HepG2 (cell line): ENCODE measurements at regions of chr3 and their contacts with region 1.

Region 1: GRCh38 chr3:82133070-82133606 is 371.7 kb upstream of the GBE1 start:
- DNase-seq: peak; percentile 42
- ATAC-seq: peak; percentile 90
- H3K4me3 ChIP-seq: no peak overlapping the region
- H3K27ac ChIP-seq: no peak overlapping the region
- H3K4me1 ChIP-seq: peaks cover 12% of the 10 kb centered on the region
- H3K27me3 ChIP-seq: no peaks in the 10 kb centered on the region
- CTCF ChIP-seq: peak; percentile 71
- EP300 ChIP-seq: no peak
- POLR2A ChIP-seq: no peak
- RAD21 ChIP-seq: no peak

Region 2: GRCh38 chr3:81419228-81419627 is 713.9 kb before region 1 on chr3:
- CTCF ChIA-PET with region 1: no interaction called
- POLR2A ChIA-PET with region 1: no interaction called
- in situ Hi-C with region 1: no loop called
- intact Hi-C with region 1: loop called (anchors 5 kb)
- DNase-seq: peak; percentile 1
- ATAC-seq: no peak
- H3K4me3 ChIP-seq: no peak overlapping the region
- H3K27ac ChIP-seq: no peak overlapping the region
- H3K4me1 ChIP-seq: no peaks in the 10 kb centered on the region
- H3K27me3 ChIP-seq: no peaks in the 10 kb centered on the region
- CTCF ChIP-seq: peak; percentile 40
- EP300 ChIP-seq: no peak
- POLR2A ChIP-seq: no peak
- RAD21 ChIP-seq: no peak

Region 3: DNA sequence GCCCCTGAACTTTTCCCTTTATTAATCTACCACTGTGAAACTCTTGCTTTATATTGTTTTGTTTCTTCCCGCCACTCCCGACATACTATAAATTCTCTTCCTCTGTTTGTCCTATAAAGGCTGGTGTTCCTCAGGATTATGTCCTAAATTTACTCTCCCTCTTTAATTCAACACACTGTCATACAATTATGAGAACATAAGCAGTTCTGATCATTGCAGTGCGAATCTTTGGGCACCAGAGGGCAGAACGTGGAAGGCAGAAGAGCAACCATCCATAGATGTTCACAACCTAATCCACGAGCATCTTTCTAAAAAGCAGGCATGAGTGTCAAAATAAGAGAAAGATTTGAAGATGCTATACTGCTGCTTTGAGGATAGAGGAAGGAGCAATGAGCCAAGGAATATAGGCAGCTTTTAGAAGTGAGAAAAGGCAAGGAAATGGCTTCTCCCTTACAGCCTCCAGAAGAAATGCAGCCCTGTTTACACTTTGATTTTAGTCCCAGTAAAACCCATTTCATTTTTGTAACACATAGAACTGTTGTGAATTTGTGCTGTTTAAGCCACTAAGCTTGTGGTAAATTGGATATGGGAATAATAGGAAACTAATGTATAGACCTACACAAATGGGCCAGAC is 551.1 kb before region 1 on chr3:
- CTCF ChIA-PET with region 1: no interaction called
- POLR2A ChIA-PET with region 1: no interaction called
- in situ Hi-C with region 1: no loop called
- intact Hi-C with region 1: loop called (anchors 10 kb)
- DNase-seq: peak; percentile 20
- ATAC-seq: peak; percentile 87
- H3K4me3 ChIP-seq: no peak overlapping the region
- H3K27ac ChIP-seq: no peak overlapping the region
- H3K4me1 ChIP-seq: no peaks in the 10 kb centered on the region
- H3K27me3 ChIP-seq: no peaks in the 10 kb centered on the region
- CTCF ChIP-seq: peak; percentile 72
- EP300 ChIP-seq: no peak
- POLR2A ChIP-seq: no peak
- RAD21 ChIP-seq: peak; percentile 25; the same call in 1 of the 2 replicates

Region 4: GRCh38 chr3:81871358-81872155 is 261.6 kb before region 1 on chr3:
- CTCF ChIA-PET with region 1: no interaction called
- POLR2A ChIA-PET with region 1: no interaction called
- in situ Hi-C with region 1: no loop called
- intact Hi-C with region 1: loop called (anchors 5 kb)
- DNase-seq: no peak
- ATAC-seq: no peak
- H3K4me3 ChIP-seq: no peak overlapping the region
- H3K27ac ChIP-seq: no peak overlapping the region
- H3K4me1 ChIP-seq: no peaks in the 10 kb centered on the region
- H3K27me3 ChIP-seq: no peaks in the 10 kb centered on the region; a peak in 1 of 5 replicates
- CTCF ChIP-seq: no peak
- EP300 ChIP-seq: no peak
- POLR2A ChIP-seq: no peak
- RAD21 ChIP-seq: no peak

Region 5: GRCh38 chr3:81985996-81986723 is 147.0 kb before region 1 on chr3:
- CTCF ChIA-PET with region 1: no interaction called
- POLR2A ChIA-PET with region 1: no interaction called
- in situ Hi-C with region 1: no loop called
- intact Hi-C with region 1: loop called (anchors 5 kb)
- DNase-seq: peak; percentile 74
- ATAC-seq: peak; percentile 98
- H3K4me3 ChIP-seq: peak overlapping the region; percentile 76 to 83 (median 76)
- H3K27ac ChIP-seq: peak overlapping the region; percentile 85
- H3K4me1 ChIP-seq: peaks cover 4% of the 10 kb centered on the region; the same call in 1 of the 2 replicates
- H3K27me3 ChIP-seq: no peaks in the 10 kb centered on the region
- CTCF ChIP-seq: peak; percentile 82
- EP300 ChIP-seq: no peak
- POLR2A ChIP-seq: peak; percentile 61 to 78
- RAD21 ChIP-seq: no peak; the same call in 1 of the 2 replicates